MCF 10A (cell line): ENCODE measurements at regions of chr5 and their contacts with region 1.

Region 1: GRCh38 chr5:62431735-62432620 is 19.4 kb downstream of the IPO11 start:
- DNase-seq: no peak
- H3K4me3 Mint-ChIP-seq: no peak overlapping the region
- H3K27ac Mint-ChIP-seq: no peak overlapping the region
- H3K4me1 Mint-ChIP-seq: peaks cover 14% of the 10 kb centered on the region
- H3K27me3 Mint-ChIP-seq: no peaks in the 10 kb centered on the region
- CTCF ChIP-seq: no peak

Region 2: DNA sequence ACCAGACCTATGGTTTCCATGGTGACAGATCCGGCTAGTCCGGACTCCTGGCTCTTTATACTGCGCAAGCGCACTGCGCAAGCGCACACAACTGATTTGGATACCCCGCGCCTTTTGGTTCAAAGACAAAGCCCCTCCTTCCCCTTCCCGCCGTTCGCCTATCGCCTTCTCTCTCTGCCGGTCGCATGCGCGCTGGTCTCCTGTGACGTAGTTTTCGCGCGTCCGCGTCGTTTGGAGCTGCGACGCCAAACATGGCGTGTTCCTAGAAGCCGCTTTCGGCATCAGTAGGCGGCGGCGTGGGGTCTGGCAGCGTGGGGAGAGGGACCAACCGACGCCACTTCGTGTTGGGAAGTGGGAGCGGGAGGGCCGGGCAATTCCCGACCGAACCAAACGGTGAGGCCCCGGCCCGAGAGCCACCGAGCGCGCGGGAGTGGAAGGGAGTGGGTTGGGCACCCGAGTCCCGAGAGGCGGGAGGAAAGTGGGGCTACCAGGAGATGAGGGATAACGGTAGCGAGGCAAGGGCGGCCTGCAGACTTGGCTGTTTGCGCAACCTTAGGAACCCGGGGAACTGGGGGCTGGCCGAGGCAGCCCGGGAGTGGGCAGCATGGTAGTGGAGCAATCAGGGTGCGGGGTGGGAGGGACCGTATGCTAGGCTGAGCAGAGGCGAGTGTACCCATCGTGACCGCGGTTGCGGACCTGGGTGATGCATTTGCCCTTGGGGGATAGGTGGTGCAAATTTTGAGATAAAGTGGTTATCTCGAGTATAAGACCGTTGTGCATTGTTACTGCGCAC is 19.2 kb before region 1 on chr5 and contains the start of gene IPO11:
- CTCF ChIA-PET with region 1: no interaction called
- POLR2A ChIA-PET with region 1: interaction called, 10 read pairs
- intact Hi-C with region 1: no loop called
- DNase-seq: peak; percentile 99
- H3K4me3 Mint-ChIP-seq: peak within 1 kb of the TSS; percentile 95
- H3K27ac Mint-ChIP-seq: peak within 1 kb of the TSS; percentile 97
- H3K4me1 Mint-ChIP-seq: peaks cover 11% of the 10 kb centered on the region
- H3K27me3 Mint-ChIP-seq: no peaks in the 10 kb centered on the region
- CTCF ChIP-seq: no peak
- total RNA-seq, gene IPO11: 30.2 and 36.6 TPM in 2 replicates

Region 3: GRCh38 chr5:62457071-62457470 is 25.1 kb after region 1 on chr5:
- CTCF ChIA-PET with region 1: no interaction called
- POLR2A ChIA-PET with region 1: no interaction called
- intact Hi-C with region 1: no loop called
- DNase-seq: peak; percentile 66
- H3K4me3 Mint-ChIP-seq: no peak overlapping the region
- H3K27ac Mint-ChIP-seq: peak overlapping the region; percentile 31
- H3K4me1 Mint-ChIP-seq: no peaks in the 10 kb centered on the region
- H3K27me3 Mint-ChIP-seq: no peaks in the 10 kb centered on the region
- CTCF ChIP-seq: no peak